ENCODE measurements at regions of chrX and their contacts with region 1.

Region 1: DNA sequence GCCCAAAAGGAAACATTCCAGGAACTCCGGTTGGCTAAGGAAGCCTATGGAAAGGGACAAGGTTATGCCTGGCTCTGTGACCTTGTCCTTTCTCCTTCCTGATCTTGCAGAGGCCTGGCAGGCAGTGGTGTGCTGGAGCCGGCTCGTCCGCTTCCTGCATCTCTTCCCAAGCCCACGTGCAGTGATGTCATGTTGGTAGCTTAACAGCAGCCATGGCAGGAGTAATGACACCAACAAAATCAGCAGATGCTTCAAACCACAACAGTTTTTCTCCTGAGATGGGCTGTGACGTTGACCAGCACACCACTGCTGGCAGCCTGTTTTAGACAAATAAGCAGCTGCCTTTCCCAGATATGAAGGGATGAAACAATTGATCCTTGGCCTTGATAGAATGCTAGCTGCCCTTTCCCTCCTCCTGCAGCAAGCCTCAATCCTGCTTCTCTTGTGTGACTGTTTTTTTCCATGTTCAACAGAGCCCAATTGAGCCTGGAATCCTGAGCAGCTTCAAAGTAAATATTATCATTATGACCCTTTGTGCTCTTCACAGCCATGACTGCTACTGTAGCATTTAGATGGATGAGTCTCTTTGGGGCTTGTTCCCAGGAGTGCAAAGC is 23.4 kb downstream of the SEPTIN6 start:
- DNase-seq: no peak
- H3K4me3 Mint-ChIP-seq: no peak overlapping the region
- H3K27ac Mint-ChIP-seq: no peak overlapping the region
- H3K4me1 Mint-ChIP-seq: peaks cover 25% of the 10 kb centered on the region
- H3K27me3 Mint-ChIP-seq: no peaks in the 10 kb centered on the region

Region 2: DNA sequence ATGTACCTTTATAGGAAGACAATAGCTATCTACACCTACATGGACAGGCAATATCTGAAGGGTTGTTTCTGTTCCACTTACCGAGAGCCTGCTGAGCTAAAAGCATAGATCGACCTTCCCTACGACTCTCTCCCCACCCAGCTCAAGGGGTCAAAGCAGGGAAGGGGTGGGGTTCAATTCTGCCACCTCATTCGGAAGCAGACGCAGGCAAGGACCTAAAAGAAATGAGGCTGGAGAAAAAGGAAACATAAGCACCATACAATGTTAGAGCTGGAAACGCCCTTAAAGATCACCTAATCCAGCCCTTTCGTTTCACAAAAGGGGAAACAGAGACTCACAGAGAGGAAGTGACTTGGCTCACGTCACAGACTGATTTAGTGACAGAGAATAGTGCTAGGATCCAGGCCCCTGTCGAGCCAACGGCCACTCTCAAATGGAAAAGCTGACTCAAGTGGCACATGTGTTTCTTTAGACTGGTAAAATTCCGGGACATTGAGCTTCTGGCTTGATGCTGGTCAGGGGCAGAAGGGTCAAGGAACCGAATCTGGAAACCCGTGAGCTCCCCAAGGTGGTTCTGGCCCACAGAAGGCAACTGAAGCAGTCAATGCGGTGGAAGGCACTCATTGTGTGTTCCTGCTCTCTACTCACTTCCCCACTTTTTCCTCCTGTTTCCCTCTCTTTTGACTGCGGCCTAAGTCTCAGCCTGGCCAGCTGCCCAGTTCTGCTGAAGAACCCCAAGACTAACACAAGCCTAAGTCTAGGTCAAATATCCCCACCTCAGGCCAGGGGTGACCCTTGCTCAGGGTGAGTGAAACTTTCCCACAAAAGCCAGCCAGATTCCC is 15.9 kb after region 1 on chrX:
- CTCF ChIA-PET with region 1: interaction called, 10 read pairs
- POLR2A ChIA-PET with region 1: interaction called, 6 read pairs
- DNase-seq: peak; percentile 60
- H3K4me3 Mint-ChIP-seq: peak overlapping the region; percentile 85
- H3K27ac Mint-ChIP-seq: peak overlapping the region; percentile 99
- H3K4me1 Mint-ChIP-seq: peaks cover 65% of the 10 kb centered on the region
- H3K27me3 Mint-ChIP-seq: no peaks in the 10 kb centered on the region

Region 3: DNA sequence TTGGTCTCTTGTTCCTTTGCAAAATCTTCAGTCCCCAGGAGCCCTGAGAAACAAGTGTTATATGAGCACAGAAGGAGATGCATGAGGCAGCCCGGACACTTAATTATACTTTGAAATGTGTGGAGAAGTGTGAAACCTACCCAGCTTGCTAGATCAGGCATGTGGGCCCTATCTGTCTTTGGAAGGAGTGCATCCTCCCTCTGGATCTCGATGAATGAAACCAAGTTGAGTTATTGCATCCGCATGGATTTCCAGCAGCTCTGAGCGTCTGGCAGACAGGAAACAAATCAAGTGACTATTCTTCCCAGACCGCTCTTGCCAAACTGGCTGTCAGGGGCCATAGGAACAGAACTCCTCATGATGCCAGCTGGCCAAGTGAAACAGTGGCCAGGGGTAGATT is 69.2 kb after region 1 on chrX:
- CTCF ChIA-PET with region 1: no interaction called
- POLR2A ChIA-PET with region 1: no interaction called
- DNase-seq: no peak
- H3K4me3 Mint-ChIP-seq: no peak overlapping the region
- H3K27ac Mint-ChIP-seq: no peak overlapping the region
- H3K4me1 Mint-ChIP-seq: no peaks in the 10 kb centered on the region
- H3K27me3 Mint-ChIP-seq: no peaks in the 10 kb centered on the region

Measured in activated CD4-positive, alpha-beta T cell treated with anti-CD3 and anti-CD28 coated beads, Interleukin-2, amount 10 ng/mL, durations not matched to agents 7 days and 5 days (primary cell).